B cell (primary cell): ENCODE measurements at regions of chr7 and their contacts with region 1.

Region 1: GRCh38 chr7:7920481-7920880 is 48.1 kb upstream of the GLCCI1 start:
- DNase-seq: peak; percentile 80
- ATAC-seq: peak; percentile 93
- H3K4me3 ChIP-seq: peak overlapping the region in 2 of 5 experiments; percentile 30 to 48
- H3K4me3 Mint-ChIP-seq: peak overlapping the region; percentile 66
- H3K27ac ChIP-seq: peak overlapping the region; percentile 53 to 60
- H3K27ac Mint-ChIP-seq: peak overlapping the region; percentile 66
- H3K4me1 ChIP-seq: peaks cover 33 to 44% of the 10 kb centered on the region in 2 donors
- H3K4me1 Mint-ChIP-seq: peaks cover 59% of the 10 kb centered on the region
- H3K27me3 ChIP-seq: no peaks in the 10 kb centered on the region
- H3K27me3 Mint-ChIP-seq: no peaks in the 10 kb centered on the region
- CTCF ChIP-seq: no peak

Region 2: GRCh38 chr7:7857143-7857583 is 63.3 kb before region 1 on chr7:
- CTCF ChIA-PET with region 1: interaction called, 5 read pairs
- POLR2A ChIA-PET with region 1: no interaction called
- intact Hi-C with region 1: loop called (anchors 2 kb)
- DNase-seq: peak; percentile 71
- ATAC-seq: peak; percentile 88
- H3K4me3 ChIP-seq: peak overlapping the region in 1 of 5 experiments; percentile 28
- H3K4me3 Mint-ChIP-seq: peak overlapping the region; percentile 32
- H3K27ac ChIP-seq: peak overlapping the region; percentile 85 to 87
- H3K27ac Mint-ChIP-seq: peak overlapping the region; percentile 94
- H3K4me1 ChIP-seq: peaks cover 31% of the 10 kb centered on the region in 2 donors
- H3K4me1 Mint-ChIP-seq: peaks cover 32% of the 10 kb centered on the region
- H3K27me3 ChIP-seq: no peaks in the 10 kb centered on the region
- H3K27me3 Mint-ChIP-seq: no peaks in the 10 kb centered on the region
- CTCF ChIP-seq: no peak